B cell (primary cell): ENCODE measurements at regions of chrX and their contacts with region 1.

Region 1: DNA sequence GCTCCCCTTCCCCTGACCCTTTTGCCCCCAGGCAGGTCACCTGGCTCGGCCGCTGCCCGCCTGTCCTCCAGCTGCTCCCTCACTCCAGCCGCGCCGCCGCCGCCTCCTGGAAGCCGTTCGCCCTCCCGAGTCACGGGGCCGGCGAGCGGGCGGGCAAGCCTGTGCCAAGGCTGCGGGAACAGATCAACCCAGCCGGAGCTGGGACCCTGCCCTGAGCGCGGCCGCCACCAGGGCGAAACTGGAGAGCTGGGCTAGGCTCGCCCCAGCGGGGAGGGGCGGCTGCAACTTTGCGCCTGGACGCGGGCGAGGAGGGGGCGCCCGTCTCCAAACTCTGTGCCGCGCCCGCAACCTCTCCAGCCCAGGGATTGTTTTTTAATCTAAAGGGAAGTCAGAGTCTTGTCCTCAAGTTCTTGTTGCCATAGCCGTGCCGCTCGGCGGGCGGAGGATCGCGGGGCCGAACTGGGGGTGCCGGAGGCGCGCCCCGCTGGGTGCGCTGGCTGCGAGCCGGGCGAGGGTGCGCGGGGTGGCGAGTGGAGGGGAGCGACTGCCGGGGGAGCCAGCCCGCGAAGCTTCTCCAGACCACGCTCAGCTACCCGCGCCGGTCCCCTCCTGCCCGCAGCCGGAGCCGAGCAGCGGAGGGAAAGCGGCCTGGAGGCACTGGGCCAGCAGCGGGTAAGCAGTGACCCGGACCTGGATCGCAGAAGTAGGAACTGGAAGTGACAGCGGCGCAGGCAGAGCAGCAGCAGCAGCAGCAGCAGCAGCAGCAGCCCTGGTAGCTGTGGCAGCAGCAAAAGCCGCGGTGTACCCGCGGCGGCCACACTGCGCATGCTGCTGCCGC is 13.4 kb downstream of the ARHGEF6 start:
- DNase-seq: peak; percentile 76
- ATAC-seq: peak; percentile 80
- H3K4me3 ChIP-seq: peak overlapping the region in 4 of 5 experiments; percentile 49 to 70 (median 62)
- H3K4me3 Mint-ChIP-seq: peak overlapping the region; percentile 83
- H3K27ac ChIP-seq: peak overlapping the region; percentile 59 to 72
- H3K27ac Mint-ChIP-seq: peak overlapping the region; percentile 92
- H3K4me1 ChIP-seq: peaks cover 27 to 38% of the 10 kb centered on the region in 2 donors
- H3K4me1 Mint-ChIP-seq: peaks cover 48% of the 10 kb centered on the region
- H3K27me3 ChIP-seq: no peaks in the 10 kb centered on the region
- H3K27me3 Mint-ChIP-seq: no peaks in the 10 kb centered on the region
- CTCF ChIP-seq: peak; percentile 28

Region 2: GRCh38 chrX:136397001-136397400 is 370.3 kb before region 1 on chrX:
- CTCF ChIA-PET with region 1: no interaction called
- POLR2A ChIA-PET with region 1: no interaction called
- intact Hi-C with region 1: no loop called
- DNase-seq: no peak
- ATAC-seq: no peak
- H3K4me3 ChIP-seq: no peak overlapping the region
- H3K4me3 Mint-ChIP-seq: no peak overlapping the region
- H3K27ac ChIP-seq: no peak overlapping the region
- H3K27ac Mint-ChIP-seq: no peak overlapping the region
- H3K4me1 ChIP-seq: no peaks in the 10 kb centered on the region
- H3K4me1 Mint-ChIP-seq: no peaks in the 10 kb centered on the region
- H3K27me3 ChIP-seq: no peaks in the 10 kb centered on the region
- H3K27me3 Mint-ChIP-seq: peaks cover 14% of the 10 kb centered on the region
- CTCF ChIP-seq: no peak

Region 3: DNA sequence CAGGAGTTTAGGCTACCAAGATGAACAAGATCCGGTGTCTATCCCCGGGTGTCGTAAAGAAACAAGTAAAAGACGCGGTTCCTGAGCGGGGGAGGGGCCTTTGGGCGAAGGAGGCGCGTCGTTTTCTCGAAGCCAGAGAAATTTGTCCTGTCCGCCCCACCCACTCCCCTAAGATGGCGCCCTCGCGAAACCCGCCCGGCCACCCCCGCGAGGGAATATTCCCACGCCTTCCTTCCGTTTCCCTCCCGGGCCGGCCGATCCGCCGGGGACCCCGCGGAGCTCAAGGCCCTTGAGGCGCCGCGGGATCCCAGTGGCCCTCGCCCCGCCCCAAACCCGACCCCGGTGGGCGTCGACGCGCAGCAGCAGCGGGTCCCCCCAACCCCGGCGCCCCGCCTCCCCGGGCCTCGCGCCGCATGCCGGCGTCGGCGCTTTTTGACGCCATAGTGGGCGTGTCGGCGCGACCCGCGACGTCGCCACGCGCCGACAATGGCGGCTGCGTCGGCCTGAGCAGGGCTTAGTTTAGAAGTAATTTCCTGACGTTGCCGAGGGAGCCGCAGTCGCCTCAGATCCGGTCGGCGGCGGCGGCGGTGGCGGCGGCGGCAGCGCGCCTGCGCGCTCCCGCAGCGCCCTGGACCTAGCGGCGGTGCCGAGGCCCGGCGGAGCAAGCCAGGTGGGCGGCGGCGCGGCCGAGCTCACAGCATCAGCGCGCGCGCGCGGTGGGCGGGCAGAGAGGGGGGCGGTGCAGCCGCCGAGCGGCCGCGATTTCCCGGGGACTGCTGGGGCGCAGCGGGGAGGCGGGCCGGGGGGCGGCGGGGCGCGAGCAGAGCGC is 270.3 kb before region 1 on chrX and contains the start of gene HTATSF1:
- CTCF ChIA-PET with region 1: no interaction called
- POLR2A ChIA-PET with region 1: no interaction called
- intact Hi-C with region 1: loop called (anchors 10 kb)
- DNase-seq: peak; percentile 92
- ATAC-seq: peak; percentile 77
- H3K4me3 ChIP-seq: peak within 1 kb of the TSS; percentile 62 to 83 (median 75)
- H3K4me3 Mint-ChIP-seq: peak within 1 kb of the TSS; percentile 93
- H3K27ac ChIP-seq: peak within 1 kb of the TSS; percentile 90 to 91
- H3K27ac Mint-ChIP-seq: peak within 1 kb of the TSS; percentile 99
- H3K4me1 ChIP-seq: peaks cover 6 to 7% of the 10 kb centered on the region in 2 donors
- H3K4me1 Mint-ChIP-seq: peaks cover 20% of the 10 kb centered on the region
- H3K27me3 ChIP-seq: no peaks in the 10 kb centered on the region
- H3K27me3 Mint-ChIP-seq: no peaks in the 10 kb centered on the region
- CTCF ChIP-seq: no peak
- total RNA-seq, gene HTATSF1: 17.9 and 18.7 TPM in 2 replicates

Region 4: GRCh38 chrX:136711147-136711546 is 56.2 kb before region 1 on chrX:
- CTCF ChIA-PET with region 1: interaction called, 17 read pairs
- POLR2A ChIA-PET with region 1: no interaction called
- intact Hi-C with region 1: loop called (anchors 2 kb)
- DNase-seq: peak; percentile 29
- ATAC-seq: no peak
- H3K4me3 ChIP-seq: no peak overlapping the region
- H3K4me3 Mint-ChIP-seq: peak overlapping the region; percentile 57
- H3K27ac ChIP-seq: peak overlapping the region; percentile 79 to 87
- H3K27ac Mint-ChIP-seq: peak overlapping the region; percentile 77
- H3K4me1 ChIP-seq: peaks cover 23 to 32% of the 10 kb centered on the region in 2 donors
- H3K4me1 Mint-ChIP-seq: peaks cover 33% of the 10 kb centered on the region
- H3K27me3 ChIP-seq: no peaks in the 10 kb centered on the region
- H3K27me3 Mint-ChIP-seq: no peaks in the 10 kb centered on the region
- CTCF ChIP-seq: no peak

Region 5: DNA sequence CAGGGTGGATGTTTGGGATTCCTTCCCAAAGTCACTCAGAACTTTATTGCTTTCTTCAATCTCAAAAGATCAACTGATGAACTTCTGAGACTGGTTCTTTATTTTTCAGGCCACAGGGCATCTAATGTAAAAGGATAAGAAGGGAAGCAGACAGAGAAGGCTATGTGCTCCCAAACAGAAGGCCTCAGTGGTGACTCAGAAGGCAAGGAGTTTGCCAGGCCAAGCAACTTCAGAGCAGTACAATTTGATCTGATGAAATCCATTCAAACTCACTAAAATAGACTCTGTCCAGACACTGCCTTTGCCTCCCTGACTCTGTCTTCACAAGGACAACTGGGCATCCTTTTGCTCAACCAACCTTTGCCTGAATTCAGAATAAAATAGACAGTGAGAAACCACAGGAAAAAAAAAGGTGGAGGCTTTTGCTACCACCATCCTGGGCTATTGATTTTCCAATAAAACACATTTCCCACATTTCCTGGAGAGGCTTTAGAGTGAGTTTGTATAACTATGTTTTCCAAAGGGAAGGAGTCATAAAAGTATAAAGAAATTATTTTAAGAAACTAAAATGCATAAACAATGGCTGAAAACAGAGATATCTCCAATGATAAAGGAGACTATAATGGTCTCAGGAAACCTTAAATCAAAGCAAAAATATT is 41.7 kb before region 1 on chrX:
- CTCF ChIA-PET with region 1: interaction called, 5 read pairs
- POLR2A ChIA-PET with region 1: no interaction called
- intact Hi-C with region 1: loop called (anchors 5 kb)
- DNase-seq: no peak
- ATAC-seq: no peak
- H3K4me3 ChIP-seq: no peak overlapping the region
- H3K4me3 Mint-ChIP-seq: no peak overlapping the region
- H3K27ac ChIP-seq: no peak overlapping the region
- H3K27ac Mint-ChIP-seq: no peak overlapping the region
- H3K4me1 ChIP-seq: peaks cover 14% of the 10 kb centered on the region in 2 donors
- H3K4me1 Mint-ChIP-seq: peaks cover 15% of the 10 kb centered on the region
- H3K27me3 ChIP-seq: no peaks in the 10 kb centered on the region
- H3K27me3 Mint-ChIP-seq: no peaks in the 10 kb centered on the region
- CTCF ChIP-seq: no peak

Region 6: DNA sequence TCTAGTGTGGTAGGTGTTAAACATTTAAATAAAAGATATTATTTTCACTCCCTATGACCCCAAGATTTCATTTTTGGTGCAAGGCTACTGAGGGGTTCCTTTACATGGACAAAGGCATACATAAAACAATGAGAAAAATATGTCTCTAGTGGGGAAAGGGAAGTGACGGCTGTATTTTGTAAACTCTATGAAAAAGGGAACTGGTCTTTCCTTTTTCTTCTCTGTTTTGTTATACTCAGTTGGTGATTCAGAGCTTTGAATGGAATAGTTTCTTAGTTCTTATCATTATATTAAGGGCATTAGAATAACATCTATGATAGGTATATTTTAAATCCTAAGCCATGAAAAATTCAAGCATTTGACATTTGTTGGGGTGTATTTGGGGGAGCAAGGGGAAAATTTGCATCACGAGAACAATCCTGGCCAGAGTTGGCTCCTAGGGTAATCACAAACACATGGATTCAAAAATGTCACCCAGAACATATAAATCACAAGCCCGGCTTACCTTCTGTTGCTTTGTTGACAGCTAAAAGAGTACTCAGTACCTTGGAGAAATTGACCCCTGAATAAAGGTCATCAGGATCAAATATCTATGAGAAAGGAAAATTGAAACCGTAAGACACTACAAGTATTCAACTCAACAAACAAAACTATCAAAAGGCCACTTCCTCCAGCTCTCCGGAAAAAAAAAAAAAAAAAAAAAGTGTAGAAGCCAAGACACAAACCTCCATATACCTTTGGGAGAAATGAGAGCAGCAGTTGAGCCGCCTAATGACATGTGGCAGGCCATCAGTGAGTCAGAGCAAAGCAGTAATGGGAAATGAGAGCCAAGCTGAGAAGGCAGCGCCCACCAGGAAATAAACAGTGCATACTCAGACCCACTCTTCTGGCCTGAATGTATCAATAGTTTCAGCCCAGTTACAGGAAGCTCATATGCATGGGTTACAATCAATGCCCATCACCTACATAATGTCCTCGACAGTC is 20.0 kb before region 1 on chrX:
- CTCF ChIA-PET with region 1: interaction called, 27 read pairs
- POLR2A ChIA-PET with region 1: interaction called, 5 read pairs
- intact Hi-C with region 1: loop called (anchors 1 kb)
- DNase-seq: peak; percentile 47
- ATAC-seq: peak; percentile 74
- H3K4me3 ChIP-seq: no peak overlapping the region
- H3K4me3 Mint-ChIP-seq: peak overlapping the region; percentile 72
- H3K27ac ChIP-seq: peak overlapping the region; percentile 69 to 84
- H3K27ac Mint-ChIP-seq: peak overlapping the region; percentile 97
- H3K4me1 ChIP-seq: peaks cover 60 to 76% of the 10 kb centered on the region in 2 donors
- H3K4me1 Mint-ChIP-seq: peaks cover 75% of the 10 kb centered on the region
- H3K27me3 ChIP-seq: no peaks in the 10 kb centered on the region
- H3K27me3 Mint-ChIP-seq: no peaks in the 10 kb centered on the region
- CTCF ChIP-seq: no peak

Region 7: GRCh38 chrX:136780763-136781162 is 13.4 kb after region 1 on chrX and contains the start of gene ARHGEF6:
- CTCF ChIA-PET with region 1: interaction called, 8 read pairs
- POLR2A ChIA-PET with region 1: interaction called, 27 read pairs
- intact Hi-C with region 1: loop called (anchors 1 kb)
- DNase-seq: peak; percentile 37
- ATAC-seq: peak; percentile 58
- H3K4me3 ChIP-seq: peak within 1 kb of the TSS; percentile 56 to 81 (median 63)
- H3K4me3 Mint-ChIP-seq: peak within 1 kb of the TSS; percentile 91
- H3K27ac ChIP-seq: peak within 1 kb of the TSS; percentile 71 to 88
- H3K27ac Mint-ChIP-seq: peak within 1 kb of the TSS; percentile 87
- H3K4me1 ChIP-seq: peaks cover 30 to 41% of the 10 kb centered on the region in 2 donors
- H3K4me1 Mint-ChIP-seq: peaks cover 56% of the 10 kb centered on the region
- H3K27me3 ChIP-seq: no peaks in the 10 kb centered on the region
- H3K27me3 Mint-ChIP-seq: no peaks in the 10 kb centered on the region
- CTCF ChIP-seq: no peak
- total RNA-seq, gene ARHGEF6: 43.4 and 45.6 TPM in 2 replicates

Region 8: GRCh38 chrX:136880452-136881013 is 113.2 kb after region 1 on chrX and contains the start of gene RBMX:
- CTCF ChIA-PET with region 1: interaction called, 3 read pairs
- POLR2A ChIA-PET with region 1: interaction called, 6 read pairs
- intact Hi-C with region 1: loop called (anchors 5 kb)
- DNase-seq: peak; percentile 94
- ATAC-seq: peak; percentile 86
- H3K4me3 ChIP-seq: peak within 1 kb of the TSS; percentile 67 to 97 (median 87)
- H3K4me3 Mint-ChIP-seq: peak within 1 kb of the TSS; percentile 98
- H3K27ac ChIP-seq: peak within 1 kb of the TSS; percentile 96
- H3K27ac Mint-ChIP-seq: peak within 1 kb of the TSS; percentile 100
- H3K4me1 ChIP-seq: peaks cover 0 to 8% of the 10 kb centered on the region in 2 donors
- H3K4me1 Mint-ChIP-seq: peaks cover 9% of the 10 kb centered on the region
- H3K27me3 ChIP-seq: no peaks in the 10 kb centered on the region
- H3K27me3 Mint-ChIP-seq: no peaks in the 10 kb centered on the region
- CTCF ChIP-seq: no peak
- total RNA-seq, gene RBMX: 231 and 239 TPM in 2 replicates